Activated CD4-positive, alpha-beta memory T cell treated with anti-CD3 and anti-CD28 coated beads for 36 hours (primary cell): ENCODE measurements at regions of chr13 and their contacts with region 1.

Region 1: GRCh38 chr13:36346222-36347083 is at the start of gene SPART:
- DNase-seq: peak; percentile 92
- H3K4me3 Mint-ChIP-seq: peak within 1 kb of the TSS; percentile 81
- H3K27ac Mint-ChIP-seq: peak within 1 kb of the TSS; percentile 91
- H3K4me1 Mint-ChIP-seq: peaks cover 38% of the 10 kb centered on the region
- H3K27me3 Mint-ChIP-seq: no peaks in the 10 kb centered on the region
- total RNA-seq, gene SPART: 22.4 to 22.5 TPM

Region 2: GRCh38 chr13:36163809-36164308 is 182.6 kb before region 1 on chr13:
- CTCF ChIA-PET with region 1: no interaction called
- POLR2A ChIA-PET with region 1: no interaction called
- intact Hi-C with region 1: no loop called
- DNase-seq: no peak
- H3K4me3 Mint-ChIP-seq: no peak overlapping the region
- H3K27ac Mint-ChIP-seq: no peak overlapping the region
- H3K4me1 Mint-ChIP-seq: no peaks in the 10 kb centered on the region
- H3K27me3 Mint-ChIP-seq: no peaks in the 10 kb centered on the region

Region 3: DNA sequence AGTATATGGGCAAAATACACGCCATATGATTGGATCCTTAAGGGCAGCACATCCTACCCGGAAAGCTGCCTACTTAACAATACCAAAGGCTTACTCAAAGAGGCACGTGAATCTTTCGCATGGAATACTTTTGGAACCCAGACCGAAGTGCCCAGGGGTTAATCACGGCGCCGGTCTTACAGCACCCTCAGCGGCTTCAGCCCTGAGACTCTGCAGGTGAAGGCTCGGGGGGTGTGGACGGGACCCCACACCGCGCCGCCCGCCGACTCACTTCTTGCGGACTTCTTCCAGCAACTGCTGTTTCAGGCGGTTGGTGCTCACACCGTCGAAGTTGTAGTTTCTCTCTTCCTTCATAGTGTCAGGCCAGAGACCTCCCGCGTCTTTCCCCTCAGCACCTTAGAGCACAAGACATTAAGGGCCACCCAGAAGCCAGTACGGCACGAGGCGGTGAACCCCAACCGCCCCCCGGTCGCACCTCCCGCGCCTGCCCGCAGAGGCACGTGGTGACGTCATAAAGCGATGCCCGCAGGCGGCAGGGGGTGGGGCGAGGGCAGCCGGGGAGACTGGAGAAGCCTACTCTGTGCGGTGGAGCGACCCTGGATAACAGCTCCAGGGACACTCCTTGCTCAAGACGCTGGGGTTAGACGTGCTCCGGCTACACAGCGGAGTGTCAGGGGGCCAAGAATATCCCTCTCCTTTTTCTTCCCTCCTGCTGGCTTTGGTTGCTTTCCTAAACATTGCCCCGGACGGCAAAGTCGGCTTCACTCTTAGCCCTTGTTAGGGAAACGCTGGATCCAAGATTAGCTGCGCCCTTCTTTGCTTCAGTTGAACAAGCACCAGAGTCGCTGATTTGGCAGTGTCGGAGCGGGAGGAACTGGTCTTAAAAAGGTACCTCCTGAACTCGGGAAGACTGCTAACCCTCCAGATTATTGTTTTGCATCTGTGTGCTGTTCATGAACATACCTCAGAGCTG is 48.8 kb before region 1 on chr13 and contains the start of gene CCDC169:
- CTCF ChIA-PET with region 1: interaction called, 4 read pairs
- POLR2A ChIA-PET with region 1: no interaction called
- intact Hi-C with region 1: loop called (anchors 2 kb)
- DNase-seq: peak; percentile 78
- H3K4me3 Mint-ChIP-seq: peak within 1 kb of the TSS; percentile 82
- H3K27ac Mint-ChIP-seq: peak within 1 kb of the TSS; percentile 60
- H3K4me1 Mint-ChIP-seq: peaks cover 15% of the 10 kb centered on the region
- H3K27me3 Mint-ChIP-seq: peaks cover 24% of the 10 kb centered on the region
- total RNA-seq, gene CCDC169: 0.69 to 1.1 TPM

Region 4: GRCh38 chr13:36395280-36395679 is 48.8 kb after region 1 on chr13:
- CTCF ChIA-PET with region 1: no interaction called
- POLR2A ChIA-PET with region 1: no interaction called
- intact Hi-C with region 1: loop called (anchors 1 kb)
- DNase-seq: no peak
- H3K4me3 Mint-ChIP-seq: no peak overlapping the region
- H3K27ac Mint-ChIP-seq: no peak overlapping the region
- H3K4me1 Mint-ChIP-seq: no peaks in the 10 kb centered on the region
- H3K27me3 Mint-ChIP-seq: peaks cover 3% of the 10 kb centered on the region

Region 5: GRCh38 chr13:36736119-36736726 is 389.8 kb after region 1 on chr13:
- CTCF ChIA-PET with region 1: interaction called, 39 read pairs
- POLR2A ChIA-PET with region 1: no interaction called
- intact Hi-C with region 1: loop called (anchors 1 kb)
- DNase-seq: peak; percentile 28
- H3K4me3 Mint-ChIP-seq: no peak overlapping the region
- H3K27ac Mint-ChIP-seq: no peak overlapping the region
- H3K4me1 Mint-ChIP-seq: no peaks in the 10 kb centered on the region
- H3K27me3 Mint-ChIP-seq: no peaks in the 10 kb centered on the region

Region 6: DNA sequence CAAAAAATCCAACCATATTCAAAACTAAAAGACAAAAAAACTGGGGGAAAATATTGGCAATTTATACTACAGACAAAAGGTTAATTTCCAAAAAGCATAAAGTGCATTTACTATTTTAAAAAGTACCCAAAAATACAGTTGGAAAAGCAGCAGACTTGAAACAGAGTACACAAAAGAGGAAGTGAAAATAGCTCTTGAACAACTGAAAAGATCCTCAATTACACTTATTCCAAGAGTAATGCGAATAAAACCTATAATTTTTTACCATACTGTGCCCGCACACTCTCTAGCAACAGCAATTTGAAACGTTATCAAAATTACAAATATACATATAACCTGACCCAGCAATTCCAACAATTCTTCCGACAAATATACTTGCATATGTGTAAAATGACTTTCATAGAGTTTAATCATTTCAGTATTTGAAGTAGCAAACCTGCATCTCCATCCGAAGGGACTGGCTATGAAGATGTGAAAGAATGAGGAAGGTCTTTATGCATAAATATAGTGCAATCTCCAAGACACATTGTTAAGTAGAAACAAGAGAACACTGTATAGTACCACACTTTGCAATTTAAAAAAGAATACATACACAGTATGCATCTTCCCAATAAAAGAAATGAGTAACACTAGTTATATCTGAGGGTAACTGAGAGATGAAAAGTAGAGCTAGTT is 627.3 kb after region 1 on chr13:
- CTCF ChIA-PET with region 1: no interaction called
- POLR2A ChIA-PET with region 1: no interaction called
- intact Hi-C with region 1: no loop called
- DNase-seq: no peak
- H3K4me3 Mint-ChIP-seq: no peak overlapping the region
- H3K27ac Mint-ChIP-seq: no peak overlapping the region
- H3K4me1 Mint-ChIP-seq: peaks cover 3% of the 10 kb centered on the region
- H3K27me3 Mint-ChIP-seq: no peaks in the 10 kb centered on the region

Region 7: GRCh38 chr13:36999054-36999714 is 652.7 kb after region 1 on chr13 and contains the start of gene ALG5:
- CTCF ChIA-PET with region 1: no interaction called
- POLR2A ChIA-PET with region 1: no interaction called
- intact Hi-C with region 1: loop called (anchors 1 kb)
- DNase-seq: peak; percentile 94
- H3K4me3 Mint-ChIP-seq: peak within 1 kb of the TSS; percentile 98
- H3K27ac Mint-ChIP-seq: peak within 1 kb of the TSS; percentile 99
- H3K4me1 Mint-ChIP-seq: peaks cover 36% of the 10 kb centered on the region
- H3K27me3 Mint-ChIP-seq: no peaks in the 10 kb centered on the region
- total RNA-seq, gene ALG5: 25.9 to 27.6 TPM

Region 8: DNA sequence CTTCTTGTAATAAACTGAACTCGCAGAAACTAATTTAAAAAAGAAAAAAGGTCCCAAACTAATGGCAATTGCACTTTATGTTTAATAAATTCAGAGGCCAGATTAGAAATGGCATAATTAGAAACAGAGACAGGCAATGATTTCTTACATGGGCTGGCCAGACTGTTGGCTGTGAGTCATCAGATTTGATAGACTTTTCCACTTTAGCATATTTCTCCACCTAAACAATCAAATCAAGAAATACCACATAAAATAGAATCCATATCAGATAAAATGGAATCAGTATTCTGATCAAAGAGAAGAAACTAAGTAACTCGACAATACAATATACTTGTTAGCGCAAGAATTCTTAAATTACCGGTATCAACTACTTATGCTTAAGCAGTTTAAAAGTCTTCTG is 683.2 kb after region 1 on chr13:
- CTCF ChIA-PET with region 1: no interaction called
- POLR2A ChIA-PET with region 1: no interaction called
- intact Hi-C with region 1: no loop called
- DNase-seq: no peak
- H3K4me3 Mint-ChIP-seq: no peak overlapping the region
- H3K27ac Mint-ChIP-seq: no peak overlapping the region
- H3K4me1 Mint-ChIP-seq: no peaks in the 10 kb centered on the region
- H3K27me3 Mint-ChIP-seq: no peaks in the 10 kb centered on the region